MCF 10A (cell line): ENCODE measurements at regions of chr16 and their contacts with region 1.

Region 1: DNA sequence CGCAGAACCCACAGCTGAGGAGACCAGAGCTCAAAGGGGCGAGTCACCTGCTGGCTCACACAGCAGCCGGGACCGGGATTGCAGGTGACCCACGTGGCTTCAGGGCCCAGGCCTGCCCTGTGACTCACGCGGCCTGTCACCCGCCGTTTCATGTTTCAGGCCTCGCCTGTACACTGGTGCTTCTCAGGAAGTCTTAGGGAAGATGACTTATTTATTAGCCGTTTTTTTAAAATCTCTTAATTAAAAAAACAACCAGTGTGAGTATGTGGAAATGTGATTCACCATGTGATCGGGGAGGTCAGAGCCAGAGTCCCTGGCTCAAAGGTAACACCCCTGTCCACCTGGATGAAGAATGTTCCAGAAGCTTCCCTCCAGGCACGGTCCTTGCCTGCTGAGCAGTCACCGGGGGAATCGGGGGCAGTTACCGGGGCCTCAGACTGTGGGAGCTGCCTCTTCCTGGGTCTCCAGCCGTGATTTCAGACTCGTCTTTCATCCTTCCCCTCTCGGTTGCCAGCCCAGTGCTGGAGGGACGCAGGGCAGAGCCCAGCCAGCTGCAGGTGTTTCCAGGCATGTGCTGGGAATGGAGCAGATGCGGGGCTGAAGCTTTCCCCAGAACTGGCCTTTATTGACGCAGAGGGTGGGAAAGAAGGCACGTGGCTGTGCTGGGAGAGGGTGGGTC is 49.3 kb downstream of the CMIP start:
- DNase-seq: peak; percentile 89
- H3K4me3 Mint-ChIP-seq: peak overlapping the region; percentile 14
- H3K27ac Mint-ChIP-seq: peak overlapping the region; percentile 89
- H3K4me1 Mint-ChIP-seq: peaks cover 43% of the 10 kb centered on the region
- H3K27me3 Mint-ChIP-seq: no peaks in the 10 kb centered on the region
- CTCF ChIP-seq: no peak

Region 2: GRCh38 chr16:81505011-81505661 is 11.2 kb after region 1 on chr16:
- CTCF ChIA-PET with region 1: interaction called, 4 read pairs
- POLR2A ChIA-PET with region 1: interaction called, 15 read pairs
- intact Hi-C with region 1: no loop called
- DNase-seq: peak; percentile 85
- H3K4me3 Mint-ChIP-seq: peak overlapping the region; percentile 40
- H3K27ac Mint-ChIP-seq: peak overlapping the region; percentile 73
- H3K4me1 Mint-ChIP-seq: peaks cover 29% of the 10 kb centered on the region
- H3K27me3 Mint-ChIP-seq: no peaks in the 10 kb centered on the region
- CTCF ChIP-seq: no peak

Region 3: DNA sequence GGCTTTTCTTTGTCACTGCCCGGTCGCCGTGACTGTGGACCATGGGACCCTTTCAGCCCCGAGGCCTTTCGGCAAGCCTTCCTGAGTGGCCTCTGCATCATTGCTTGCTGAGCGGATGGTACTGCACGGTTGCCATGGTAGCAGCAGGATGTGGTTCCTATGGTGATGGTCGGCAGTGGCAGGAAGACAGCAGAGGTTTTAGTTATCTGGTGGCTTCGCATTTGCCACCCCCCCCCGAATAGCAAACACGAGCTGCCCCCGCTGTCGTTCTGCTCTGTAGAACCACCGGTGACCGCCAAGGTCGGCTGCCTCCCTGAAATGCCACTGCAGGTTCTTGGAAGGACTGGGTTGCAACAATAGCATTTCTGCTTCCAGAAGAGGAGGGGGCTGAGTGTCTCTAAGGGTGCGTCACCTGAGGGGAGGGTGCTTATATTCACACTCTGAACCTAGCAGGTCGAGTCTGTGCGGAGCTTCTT is 27.3 kb after region 1 on chr16:
- CTCF ChIA-PET with region 1: interaction called, 6 read pairs
- POLR2A ChIA-PET with region 1: interaction called, 27 read pairs
- intact Hi-C with region 1: no loop called
- DNase-seq: no peak
- H3K4me3 Mint-ChIP-seq: no peak overlapping the region
- H3K27ac Mint-ChIP-seq: peak overlapping the region; percentile 57
- H3K4me1 Mint-ChIP-seq: peaks cover 33% of the 10 kb centered on the region
- H3K27me3 Mint-ChIP-seq: no peaks in the 10 kb centered on the region
- CTCF ChIP-seq: no peak